Ovary (tissue), 10 donors: ENCODE measurements at regions of chr5 and their contacts with region 1.

Region 1: GRCh38 chr5:103718108-103718507 is 155.5 kb upstream of the NUDT12 start:
- DNase-seq: no peak
- H3K4me3 ChIP-seq: no peak overlapping the region
- H3K27ac ChIP-seq: no peak overlapping the region
- H3K4me1 ChIP-seq: no peaks in the 10 kb centered on the region
- H3K27me3 ChIP-seq: no peaks in the 10 kb centered on the region
- CTCF ChIP-seq: no peak
- EP300 ChIP-seq: no peak
- POLR2A ChIP-seq: no peak

Region 2: GRCh38 chr5:103942587-103943186 is 224.6 kb after region 1 on chr5:
- intact Hi-C with region 1: loop called in 1 of 4 experiments (anchors 5 kb)
- DNase-seq: no peak
- H3K4me3 ChIP-seq: no peak overlapping the region
- H3K27ac ChIP-seq: no peak overlapping the region
- H3K4me1 ChIP-seq: no peaks in the 10 kb centered on the region
- H3K27me3 ChIP-seq: peaks cover 2% of the 10 kb centered on the region
- CTCF ChIP-seq: no peak
- EP300 ChIP-seq: no peak
- POLR2A ChIP-seq: no peak